OCI-LY7 (cell line): ENCODE measurements at regions of chr9 and their contacts with region 1.

Region 1: DNA sequence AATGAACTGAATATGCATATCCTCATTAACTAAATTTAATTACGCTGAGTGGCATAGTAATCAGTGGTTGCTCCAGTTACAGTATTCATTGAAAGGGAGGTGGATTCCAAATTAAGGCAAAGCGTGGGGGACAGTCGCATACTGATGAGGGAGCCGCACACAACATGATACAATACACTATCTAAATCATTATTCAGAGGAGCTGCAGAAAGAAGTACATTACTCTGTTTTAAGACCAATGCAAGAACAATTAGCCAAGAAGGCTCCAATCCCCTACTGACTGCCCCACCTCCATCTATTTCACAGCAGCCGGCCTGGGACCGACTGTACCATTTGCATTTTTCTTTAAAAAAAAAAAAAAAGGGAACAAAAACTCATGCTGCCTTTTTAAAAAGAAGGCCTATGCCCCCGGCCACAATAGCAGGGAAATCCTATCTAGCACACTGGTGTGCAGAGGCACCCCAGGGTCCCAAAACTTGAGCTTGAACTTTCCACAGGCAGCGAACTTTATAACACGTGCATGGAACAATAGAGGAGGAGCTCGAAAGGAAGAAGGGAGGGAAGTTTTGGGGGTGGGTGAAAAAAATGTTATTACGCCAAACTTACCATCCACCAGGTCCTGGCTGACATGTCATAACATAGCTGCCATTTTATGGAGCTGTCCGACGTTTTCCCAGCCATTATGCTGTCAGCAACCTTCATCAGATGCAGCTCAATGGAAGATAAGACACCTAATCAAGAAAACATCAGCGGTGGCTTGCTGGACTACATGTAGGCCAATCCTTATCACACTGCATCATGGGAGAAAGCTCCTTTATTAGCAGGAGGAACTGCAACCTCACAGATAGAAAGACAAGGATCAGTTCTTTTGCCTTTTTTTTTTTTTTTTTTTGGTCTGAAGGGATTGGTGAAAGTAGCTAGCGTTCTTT is 161.6 kb downstream of the ZDHHC21 start:
- DNase-seq: no peak
- H3K4me3 ChIP-seq: no peak overlapping the region
- H3K27ac ChIP-seq: no peak overlapping the region
- H3K4me1 ChIP-seq: no peaks in the 10 kb centered on the region
- CTCF ChIP-seq: no peak

Region 2: GRCh38 chr9:12740845-12741244 is 1790.8 kb before region 1 on chr9:
- CTCF ChIA-PET with region 1: no interaction called
- POLR2A ChIA-PET with region 1: interaction called, 10 read pairs
- intact Hi-C with region 1: no loop called
- DNase-seq: no peak
- H3K4me3 ChIP-seq: no peak overlapping the region
- H3K27ac ChIP-seq: no peak overlapping the region
- H3K4me1 ChIP-seq: no peaks in the 10 kb centered on the region
- CTCF ChIP-seq: no peak